ENCODE measurements at regions of chr12 and their contacts with region 1.

Region 1: DNA sequence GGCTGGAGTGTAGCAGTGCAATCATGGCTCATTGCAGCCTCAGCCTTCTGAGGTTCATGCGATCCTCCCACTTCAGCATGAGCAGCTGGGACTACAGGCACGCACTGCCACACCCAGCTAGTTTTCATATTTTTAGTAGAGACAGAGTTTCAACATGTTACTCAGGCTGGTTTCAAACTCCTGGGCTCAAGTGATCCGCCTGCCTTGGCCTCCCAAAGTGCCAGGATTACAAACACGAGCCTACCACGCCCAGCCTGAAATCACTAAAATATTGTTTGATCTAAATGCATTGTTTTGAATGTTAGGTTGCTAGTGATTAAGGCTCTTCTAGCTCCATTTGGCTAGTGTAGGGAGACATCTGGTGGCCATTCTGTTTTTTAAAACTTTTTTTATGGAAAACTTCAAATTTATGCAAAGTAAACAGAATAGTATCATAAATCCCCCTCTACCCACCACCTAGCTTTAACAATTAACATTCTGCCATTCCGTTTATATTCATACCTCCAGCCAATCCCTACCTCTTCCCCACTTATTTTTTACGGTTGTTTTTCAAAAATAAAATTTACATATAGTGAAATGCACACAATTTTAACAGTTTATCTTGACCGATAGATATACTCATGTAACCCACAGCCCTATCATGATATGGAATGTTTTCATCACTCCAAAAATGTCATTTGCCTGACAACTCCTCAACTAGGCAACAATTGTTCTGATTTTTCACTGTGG is 37.8 kb downstream of the MYO1H start:
- DNase-seq: no peak
- ATAC-seq: no peak
- H3K4me3 Mint-ChIP-seq: no peak overlapping the region
- H3K27ac Mint-ChIP-seq: no peak overlapping the region
- H3K4me1 Mint-ChIP-seq: no peaks in the 10 kb centered on the region
- H3K27me3 Mint-ChIP-seq: peaks cover 9% of the 10 kb centered on the region
- CTCF ChIP-seq: peak; percentile 17; the same call in 1 of the 2 replicates

Region 2: GRCh38 chr12:109264095-109264942 is 121.2 kb before region 1 on chr12:
- CTCF ChIA-PET with region 1: interaction called, 55 read pairs
- POLR2A ChIA-PET with region 1: no interaction called
- DNase-seq: peak; percentile 95
- ATAC-seq: peak; percentile 90
- H3K4me3 Mint-ChIP-seq: no peak overlapping the region
- H3K27ac Mint-ChIP-seq: no peak overlapping the region
- H3K4me1 Mint-ChIP-seq: peaks cover 10% of the 10 kb centered on the region
- H3K27me3 Mint-ChIP-seq: no peaks in the 10 kb centered on the region
- CTCF ChIP-seq: peak; percentile 58; the same call in 1 of the 2 replicates

Region 3: DNA sequence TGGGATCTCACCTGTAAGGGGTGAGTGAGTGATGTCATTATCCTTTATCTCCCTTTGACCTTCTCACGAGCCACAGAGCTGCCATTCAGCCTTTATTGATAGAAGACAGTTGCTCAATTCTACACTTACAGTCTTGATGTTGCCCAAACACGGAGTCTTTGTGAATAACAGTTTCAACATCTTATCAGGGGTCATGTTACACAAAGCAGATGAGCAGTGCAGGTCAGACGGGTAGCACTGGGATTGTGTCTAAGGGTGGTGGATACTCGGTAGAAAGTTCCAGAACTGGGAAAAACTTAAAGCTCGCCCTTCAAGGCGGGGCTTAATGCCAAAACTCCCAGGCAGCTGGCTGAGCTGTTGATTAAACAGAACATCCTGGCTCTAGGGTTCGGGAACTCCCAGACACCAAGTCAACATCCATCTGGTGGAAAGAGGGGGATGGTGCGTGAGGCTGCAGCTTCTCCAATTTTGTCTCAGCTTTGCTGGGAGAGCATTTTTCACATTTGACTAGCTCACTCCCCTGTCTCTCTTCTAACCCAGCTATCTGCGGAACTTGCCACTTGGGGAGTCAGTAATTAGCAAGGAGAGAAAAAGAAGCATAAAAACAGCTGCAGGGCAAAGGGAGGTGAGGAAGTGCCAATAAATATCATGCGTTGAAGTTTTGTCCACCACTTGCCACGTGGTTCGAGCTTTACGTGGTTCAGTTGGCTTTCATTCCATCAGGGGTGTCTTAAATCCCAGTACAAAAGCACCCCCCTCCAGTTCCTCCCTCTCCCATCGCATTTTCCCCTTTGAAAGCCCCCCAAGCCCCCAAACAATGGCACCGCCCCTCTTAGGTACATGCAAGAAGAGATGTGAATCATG is 107.4 kb before region 1 on chr12:
- CTCF ChIA-PET with region 1: interaction called, 15 read pairs
- POLR2A ChIA-PET with region 1: no interaction called
- DNase-seq: no peak
- ATAC-seq: 0 out of 2 replicates have a peak, but pooled peaks have one; percentile 9
- H3K4me3 Mint-ChIP-seq: no peak overlapping the region
- H3K27ac Mint-ChIP-seq: no peak overlapping the region
- H3K4me1 Mint-ChIP-seq: peaks cover 17% of the 10 kb centered on the region
- H3K27me3 Mint-ChIP-seq: peaks cover 6% of the 10 kb centered on the region; the same call in 1 of the 2 replicates
- CTCF ChIP-seq: no peak

Measured in WTC11 (cell line).